ENCODE measurements at regions of chr12 and their contacts with region 1.

Region 1: GRCh38 chr12:27996761-27997160 is 24.2 kb upstream of the PTHLH start:
- DNase-seq: no peak
- ATAC-seq: no peak
- H3K4me3 ChIP-seq: no peak overlapping the region
- H3K27ac ChIP-seq: no peak overlapping the region
- H3K4me1 ChIP-seq: no peaks in the 10 kb centered on the region
- H3K27me3 ChIP-seq: no peaks in the 10 kb centered on the region
- CTCF ChIP-seq: no peak

Region 2: GRCh38 chr12:27979145-27979544 is 17.6 kb before region 1 on chr12:
- CTCF ChIA-PET with region 1: no interaction called
- POLR2A ChIA-PET with region 1: interaction called, 14 read pairs
- in situ Hi-C with region 1: no loop called
- intact Hi-C with region 1: no loop called
- DNase-seq: no peak
- ATAC-seq: no peak
- H3K4me3 ChIP-seq: no peak overlapping the region
- H3K27ac ChIP-seq: no peak overlapping the region
- H3K4me1 ChIP-seq: peaks cover 13% of the 10 kb centered on the region
- H3K27me3 ChIP-seq: peaks cover 26% of the 10 kb centered on the region
- CTCF ChIP-seq: no peak